Endothelial cell of umbilical vein (primary cell): ENCODE measurements at regions of chr4 and their contacts with region 1.

Region 1: DNA sequence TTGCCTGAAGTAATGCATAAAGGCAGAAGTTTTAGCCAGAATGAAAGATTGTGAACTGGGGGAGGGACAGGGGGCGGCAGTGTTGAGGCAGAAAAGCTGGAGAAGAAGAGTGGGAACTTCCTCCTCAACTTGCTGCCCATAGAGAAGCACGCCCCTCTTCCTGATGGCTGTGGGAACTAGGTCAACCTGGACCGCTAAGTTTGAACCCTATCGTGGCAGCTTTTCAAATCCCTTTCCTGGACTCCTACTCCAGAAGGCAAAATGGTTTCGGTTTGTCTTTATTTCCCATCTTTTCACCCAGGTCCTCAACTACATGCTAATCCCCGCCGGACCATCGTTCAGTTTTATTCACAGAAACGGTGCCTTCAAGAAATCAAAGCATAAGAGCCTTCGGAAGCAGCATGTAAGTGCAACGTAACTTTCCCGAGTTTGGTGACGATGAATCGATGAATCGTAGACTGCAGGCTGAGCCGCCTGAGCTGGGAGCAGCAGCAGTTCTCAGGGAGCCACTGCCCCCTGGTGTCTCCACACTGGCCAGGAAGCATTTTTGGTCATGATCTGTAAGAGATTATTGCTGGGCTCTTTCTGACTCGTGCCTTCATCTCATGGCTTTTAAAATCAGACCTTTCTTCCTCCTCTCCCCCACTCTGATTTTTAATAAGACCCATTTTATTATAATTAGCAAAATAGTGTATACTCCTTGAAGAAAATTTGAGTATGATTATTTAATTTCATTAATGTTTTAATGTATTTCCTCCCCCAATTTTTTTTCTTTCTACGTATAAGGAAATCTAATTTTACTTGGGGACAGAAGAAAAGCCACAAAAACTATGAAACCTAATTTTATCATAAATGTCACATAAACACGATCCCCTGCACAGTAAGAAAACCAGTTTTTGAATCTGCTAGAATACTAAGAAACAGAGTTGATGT is 21.4 kb downstream of the SPINK2 start:
- DNase-seq: peak; percentile 87
- H3K4me3 ChIP-seq: peak overlapping the region; percentile 54 to 99 (median 92)
- H3K27ac ChIP-seq: peak overlapping the region; percentile 49
- H3K4me1 ChIP-seq: no peaks in the 10 kb centered on the region
- H3K27me3 ChIP-seq: no peaks in the 10 kb centered on the region
- CTCF ChIP-seq: peak; percentile 86 to 94
- POLR2A ChIP-seq: no peak

Region 2: DNA sequence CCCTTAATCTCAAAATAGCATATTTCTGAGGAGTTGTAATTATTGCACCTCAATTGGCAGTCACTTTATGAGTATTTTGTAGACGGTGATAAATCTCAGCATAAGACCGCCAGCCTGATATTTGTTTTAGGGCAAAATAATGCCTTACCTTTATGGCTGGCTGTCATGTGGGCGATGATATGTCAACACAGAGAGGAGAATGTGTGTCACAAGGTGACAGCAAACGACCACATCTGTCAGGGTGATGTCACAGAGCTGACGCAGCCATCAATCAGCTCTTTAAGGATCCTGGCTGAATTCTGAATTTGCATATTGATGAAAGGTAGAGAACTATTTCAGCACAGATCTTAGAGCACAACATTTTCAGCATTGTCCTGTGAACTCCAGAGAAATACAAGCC is 641.6 kb before region 1 on chr4:
- CTCF ChIA-PET with region 1: no interaction called
- POLR2A ChIA-PET with region 1: no interaction called
- dilution Hi-C with region 1: no loop called
- intact Hi-C with region 1: no loop called
- DNase-seq: no peak
- H3K4me3 ChIP-seq: no peak overlapping the region
- H3K27ac ChIP-seq: no peak overlapping the region
- H3K4me1 ChIP-seq: no peaks in the 10 kb centered on the region
- H3K27me3 ChIP-seq: no peaks in the 10 kb centered on the region
- CTCF ChIP-seq: no peak
- POLR2A ChIP-seq: no peak

Region 3: GRCh38 chr4:56424697-56425514 is 375.2 kb before region 1 on chr4:
- CTCF ChIA-PET with region 1: interaction called, 7 read pairs
- POLR2A ChIA-PET with region 1: no interaction called
- dilution Hi-C with region 1: no loop called
- intact Hi-C with region 1: loop called (anchors 1 kb)
- DNase-seq: peak; percentile 61
- H3K4me3 ChIP-seq: no peak overlapping the region
- H3K27ac ChIP-seq: no peak overlapping the region
- H3K4me1 ChIP-seq: peaks cover 6% of the 10 kb centered on the region
- H3K27me3 ChIP-seq: no peaks in the 10 kb centered on the region
- CTCF ChIP-seq: peak; percentile 40 to 45
- POLR2A ChIP-seq: no peak

Region 4: DNA sequence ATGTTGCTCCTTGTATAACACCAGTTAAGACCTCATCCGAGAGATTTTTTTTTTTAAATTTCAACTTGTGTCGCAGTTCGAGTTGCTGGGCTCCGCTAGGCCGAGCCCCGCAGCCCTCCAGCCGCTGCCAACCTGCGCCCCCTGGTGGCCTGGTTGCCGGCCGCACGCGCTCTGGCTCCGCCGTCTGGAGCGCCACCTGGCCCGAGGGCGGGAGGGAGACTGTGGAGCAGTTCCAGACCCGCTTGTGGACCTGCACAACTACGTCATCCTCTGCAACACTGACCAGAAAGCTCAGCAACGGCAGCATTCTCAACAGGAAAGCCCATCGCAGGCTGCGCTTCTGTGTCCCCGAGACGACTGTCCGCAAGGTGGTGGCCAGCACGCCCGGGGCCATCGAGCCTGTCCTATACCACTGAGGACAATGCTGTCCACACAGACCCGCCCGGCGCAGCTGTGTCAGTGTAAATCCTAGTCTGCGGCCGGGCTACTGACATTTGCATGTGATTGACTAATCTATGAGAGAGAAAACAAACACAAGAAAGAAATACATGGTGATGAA is 255.4 kb before region 1 on chr4:
- CTCF ChIA-PET with region 1: interaction called, 4 read pairs
- POLR2A ChIA-PET with region 1: no interaction called
- dilution Hi-C with region 1: no loop called
- intact Hi-C with region 1: loop called (anchors 1 kb)
- DNase-seq: peak; percentile 85
- H3K4me3 ChIP-seq: peak overlapping the region in 2 of 3 experiments; percentile 43 to 51
- H3K27ac ChIP-seq: no peak overlapping the region
- H3K4me1 ChIP-seq: peaks cover 3% of the 10 kb centered on the region
- H3K27me3 ChIP-seq: peaks cover 8 to 9% of the 10 kb centered on the region in 2 experiments
- CTCF ChIP-seq: peak; percentile 98 to 99
- POLR2A ChIP-seq: no peak

Region 5: GRCh38 chr4:56575820-56576429 is 224.2 kb before region 1 on chr4:
- CTCF ChIA-PET with region 1: interaction called, 121 read pairs
- POLR2A ChIA-PET with region 1: no interaction called
- dilution Hi-C with region 1: no loop called
- intact Hi-C with region 1: loop called (anchors 1 kb)
- DNase-seq: peak; percentile 42
- H3K4me3 ChIP-seq: no peak overlapping the region
- H3K27ac ChIP-seq: no peak overlapping the region
- H3K4me1 ChIP-seq: no peaks in the 10 kb centered on the region
- H3K27me3 ChIP-seq: no peaks in the 10 kb centered on the region
- CTCF ChIP-seq: peak; percentile 17 to 29
- POLR2A ChIP-seq: no peak

Region 6: GRCh38 chr4:56641494-56642051 is 158.5 kb before region 1 on chr4:
- CTCF ChIA-PET with region 1: interaction called, 13 read pairs
- POLR2A ChIA-PET with region 1: no interaction called
- dilution Hi-C with region 1: no loop called
- intact Hi-C with region 1: no loop called
- DNase-seq: peak; percentile 87
- H3K4me3 ChIP-seq: no peak overlapping the region
- H3K27ac ChIP-seq: peak overlapping the region; percentile 74
- H3K4me1 ChIP-seq: peaks cover 19% of the 10 kb centered on the region
- H3K27me3 ChIP-seq: no peaks in the 10 kb centered on the region
- CTCF ChIP-seq: no peak
- POLR2A ChIP-seq: no peak

Region 7: DNA sequence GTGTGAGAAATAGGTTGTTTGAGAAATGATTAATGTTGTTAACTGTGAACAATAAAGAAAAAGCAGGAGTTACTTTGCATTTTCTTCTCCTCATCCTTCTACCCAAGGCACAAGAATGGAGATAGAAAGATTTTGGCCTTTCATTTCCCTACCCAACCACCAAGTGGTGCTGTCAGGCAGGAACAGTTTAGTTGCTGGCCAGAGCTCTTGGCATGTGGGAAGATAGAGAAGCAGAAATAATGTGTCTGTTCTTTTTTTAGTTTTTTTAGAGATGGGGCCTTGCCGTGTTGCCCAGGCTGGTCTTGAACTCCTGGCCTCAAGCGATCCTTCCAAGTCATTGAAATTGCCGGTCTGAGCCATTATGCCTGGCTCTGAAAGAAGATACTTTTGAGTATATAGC is 131.8 kb before region 1 on chr4:
- CTCF ChIA-PET with region 1: interaction called, 14 read pairs
- POLR2A ChIA-PET with region 1: no interaction called
- dilution Hi-C with region 1: no loop called
- intact Hi-C with region 1: loop called (anchors 1 kb)
- DNase-seq: no peak
- H3K4me3 ChIP-seq: no peak overlapping the region
- H3K27ac ChIP-seq: no peak overlapping the region
- H3K4me1 ChIP-seq: peaks cover 5% of the 10 kb centered on the region
- H3K27me3 ChIP-seq: no peaks in the 10 kb centered on the region
- CTCF ChIP-seq: peak in 1 of 2 donors; percentile 21
- POLR2A ChIP-seq: no peak

Region 8: GRCh38 chr4:56840559-56840958 is 40.5 kb after region 1 on chr4:
- CTCF ChIA-PET with region 1: interaction called, 18 read pairs
- POLR2A ChIA-PET with region 1: no interaction called
- dilution Hi-C with region 1: no loop called
- intact Hi-C with region 1: no loop called
- DNase-seq: no peak
- H3K4me3 ChIP-seq: no peak overlapping the region
- H3K27ac ChIP-seq: no peak overlapping the region
- H3K4me1 ChIP-seq: no peaks in the 10 kb centered on the region
- H3K27me3 ChIP-seq: no peaks in the 10 kb centered on the region
- CTCF ChIP-seq: no peak
- POLR2A ChIP-seq: no peak